Spleen (tissue), 13 donors: ENCODE measurements at regions of chr11 and their contacts with region 1.

Region 1: DNA sequence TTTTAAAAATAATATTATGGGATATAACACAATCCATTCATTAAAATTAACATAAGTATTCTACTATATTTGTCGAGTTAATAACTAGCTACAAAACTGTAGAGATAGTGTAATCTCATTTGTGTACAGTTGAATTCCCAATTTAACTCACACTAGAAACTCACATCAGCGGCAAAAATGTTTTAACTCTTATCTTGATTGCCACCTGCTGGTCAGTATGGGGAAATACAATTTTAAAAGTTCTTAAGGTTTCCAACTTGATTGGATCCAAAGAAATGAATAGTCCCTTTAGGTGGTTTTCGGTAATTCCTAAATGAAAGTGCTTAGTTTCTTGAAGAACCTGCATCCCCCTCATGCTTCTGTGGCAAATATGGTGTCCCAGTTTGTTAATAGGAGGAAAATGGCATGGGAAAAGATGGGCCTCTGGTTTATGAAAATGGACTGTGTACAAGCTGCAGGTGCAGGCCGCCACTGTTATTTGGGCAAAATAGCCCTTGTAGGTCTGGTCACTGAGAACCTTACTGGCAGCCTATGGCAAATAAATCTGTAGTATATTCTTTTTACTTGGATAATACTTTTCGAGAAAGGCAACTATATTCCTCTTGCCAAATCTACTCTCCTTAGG is 33.7 kb upstream of the SLC17A6 start:
- DNase-seq: no peak
- H3K4me3 ChIP-seq: no peak overlapping the region
- H3K27ac ChIP-seq: no peak overlapping the region
- H3K4me1 ChIP-seq: no peaks in the 10 kb centered on the region
- H3K27me3 ChIP-seq: peaks cover 0 to 7% (median 0%) of the 10 kb centered on the region in 7 donors
- CTCF ChIP-seq: peak in 10 of 11 experiments; percentile 31 to 73 (median 60)
- POLR2A ChIP-seq: no peak

Region 2: DNA sequence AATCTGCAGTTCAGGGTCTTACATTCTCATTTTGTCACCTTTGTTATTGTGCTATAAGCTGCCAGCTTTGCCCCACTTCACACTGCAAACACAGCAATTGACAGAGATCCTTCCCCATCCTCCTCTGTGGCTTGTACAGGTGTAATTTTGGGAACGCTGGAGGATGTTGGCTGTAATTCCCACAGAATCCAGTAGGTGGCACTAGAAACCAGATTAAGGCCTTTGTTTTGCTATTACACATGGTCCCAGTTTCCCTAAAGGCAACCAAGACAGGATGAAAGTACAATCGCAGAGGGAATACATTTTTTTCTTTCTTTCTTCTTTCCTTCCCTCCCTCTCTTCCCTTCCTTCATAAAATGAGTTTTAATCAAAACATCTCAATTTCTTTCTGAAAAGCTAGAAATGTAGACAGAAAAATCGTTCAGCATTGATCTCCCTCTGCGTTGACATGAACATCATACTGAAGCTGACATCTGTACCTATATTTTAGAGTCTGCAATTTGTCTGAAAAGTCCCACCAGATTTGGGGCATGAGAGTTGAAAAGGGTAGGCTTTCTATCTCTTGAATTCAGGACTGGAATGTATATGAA is 1656.4 kb before region 1 on chr11:
- intact Hi-C with region 1: loop called (anchors 10 kb)
- DNase-seq: no peak
- H3K4me3 ChIP-seq: no peak overlapping the region
- H3K27ac ChIP-seq: no peak overlapping the region
- H3K4me1 ChIP-seq: no peaks in the 10 kb centered on the region
- H3K27me3 ChIP-seq: peaks cover 0 to 11% (median 0%) of the 10 kb centered on the region in 7 donors
- CTCF ChIP-seq: peak; percentile 50 to 87 (median 80)
- POLR2A ChIP-seq: no peak

Region 3: GRCh38 chr11:21896746-21897602 is 407.5 kb before region 1 on chr11:
- intact Hi-C with region 1: no loop called
- DNase-seq: no peak
- H3K4me3 ChIP-seq: no peak overlapping the region
- H3K27ac ChIP-seq: no peak overlapping the region
- H3K4me1 ChIP-seq: no peaks in the 10 kb centered on the region
- H3K27me3 ChIP-seq: no peaks in the 10 kb centered on the region
- CTCF ChIP-seq: no peak
- POLR2A ChIP-seq: no peak

Region 4: DNA sequence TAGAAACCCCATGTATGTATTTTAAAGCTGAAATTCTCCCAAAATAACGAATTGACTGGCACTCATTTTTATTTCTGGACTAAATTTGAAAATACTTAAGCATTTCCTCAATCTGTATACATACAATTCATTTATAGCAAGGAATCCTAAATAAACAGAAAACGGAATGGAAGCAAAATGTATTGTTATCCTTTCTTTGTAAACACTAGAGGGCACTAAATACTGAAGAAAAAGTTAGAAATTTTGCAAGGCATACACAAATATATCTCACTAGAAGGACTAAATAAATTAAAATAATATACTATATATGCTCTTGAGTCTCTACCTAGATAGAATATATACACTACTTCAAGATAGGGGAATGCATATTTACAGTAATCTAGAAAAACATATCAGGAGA is 134.6 kb before region 1 on chr11:
- intact Hi-C with region 1: loop called (anchors 10 kb)
- DNase-seq: no peak
- H3K4me3 ChIP-seq: no peak overlapping the region
- H3K27ac ChIP-seq: no peak overlapping the region
- H3K4me1 ChIP-seq: no peaks in the 10 kb centered on the region
- H3K27me3 ChIP-seq: no peaks in the 10 kb centered on the region
- CTCF ChIP-seq: peak in 5 of 11 experiments; percentile 6 to 30 (median 23)
- POLR2A ChIP-seq: no peak

Region 5: GRCh38 chr11:22567759-22568158 is 263.3 kb after region 1 on chr11:
- intact Hi-C with region 1: no loop called
- DNase-seq: peak; percentile 59
- H3K4me3 ChIP-seq: no peak overlapping the region
- H3K27ac ChIP-seq: no peak overlapping the region
- H3K4me1 ChIP-seq: no peaks in the 10 kb centered on the region
- H3K27me3 ChIP-seq: peaks cover 0 to 14% (median 0%) of the 10 kb centered on the region in 7 donors
- CTCF ChIP-seq: no peak
- POLR2A ChIP-seq: no peak